ENCODE measurements at regions of chr3 and their contacts with region 1.

Region 1: DNA sequence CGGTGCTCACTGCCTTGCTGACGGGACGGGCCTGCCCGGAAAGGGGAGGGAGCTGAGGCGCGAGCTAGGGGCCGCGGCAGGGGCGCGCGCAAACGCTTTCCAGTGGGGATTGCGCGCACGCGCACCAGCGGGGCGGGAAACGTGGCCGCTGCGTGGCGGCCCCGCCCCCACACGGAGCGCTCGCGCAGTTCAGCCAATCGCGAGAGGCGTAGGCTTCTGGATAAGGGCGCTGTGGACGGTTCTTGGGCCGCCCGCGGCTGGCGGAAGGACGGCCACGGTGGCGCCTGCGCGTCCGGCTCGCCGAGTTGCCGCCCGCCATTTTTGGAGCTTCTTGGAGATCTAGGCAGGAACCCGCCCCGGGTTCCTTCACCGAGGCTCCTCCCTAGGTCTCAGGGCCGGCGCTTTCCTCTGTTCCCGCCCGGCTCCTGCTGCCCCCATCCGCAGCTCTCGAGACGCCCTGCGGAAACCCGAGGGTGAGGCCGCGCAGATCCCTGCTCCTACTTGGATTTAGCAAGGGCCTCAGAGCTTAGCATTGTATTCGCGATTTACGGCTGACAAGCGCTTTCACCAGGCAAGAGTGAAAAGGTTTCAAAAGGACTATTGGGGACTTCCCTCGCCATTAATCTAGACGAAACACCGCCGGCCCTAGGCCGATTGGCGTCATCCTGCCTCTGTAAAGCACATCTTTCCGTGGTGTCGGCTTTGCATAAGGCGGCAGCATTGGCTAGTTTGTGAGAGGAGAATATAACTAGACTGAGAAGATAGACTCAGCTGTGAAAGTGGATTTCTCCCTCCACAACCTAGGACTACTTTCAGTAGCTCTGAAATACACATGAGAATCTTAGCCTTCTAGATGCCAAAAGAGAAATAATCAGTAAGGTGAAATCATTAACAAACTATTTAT is 496 bp upstream of the STAG1 start:
- DNase-seq: peak; percentile 100

Region 2: DNA sequence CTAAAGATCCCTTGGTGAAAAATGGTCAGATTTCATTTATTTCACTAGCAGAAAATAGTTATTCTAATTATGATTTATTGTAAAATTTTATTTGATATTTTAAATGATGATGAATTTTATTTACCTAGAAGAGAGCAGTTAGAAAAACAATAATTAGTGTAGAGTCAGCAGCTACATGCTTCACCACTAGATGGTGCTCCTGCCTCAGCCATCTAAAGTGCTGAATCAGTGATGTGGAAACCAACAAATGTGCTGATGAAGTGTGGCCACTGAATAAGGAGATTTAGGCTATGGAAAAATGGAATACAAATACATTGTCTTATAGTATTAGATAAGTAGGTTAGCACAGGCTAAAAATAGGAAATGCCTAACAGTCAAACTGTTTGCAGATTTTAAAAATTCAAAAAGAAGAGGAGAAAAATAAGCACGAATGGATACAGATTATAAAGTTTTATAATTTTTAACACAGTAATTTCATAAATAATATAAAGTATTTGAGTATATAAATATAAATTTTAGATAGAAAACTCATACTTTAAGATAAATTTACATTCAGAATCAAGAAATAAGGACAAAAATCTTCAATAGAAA is 677.4 kb before region 1 on chr3:
- intact Hi-C with region 1: loop called in 1 of 2 experiments (anchors 10 kb)
- DNase-seq: no peak

Region 3: DNA sequence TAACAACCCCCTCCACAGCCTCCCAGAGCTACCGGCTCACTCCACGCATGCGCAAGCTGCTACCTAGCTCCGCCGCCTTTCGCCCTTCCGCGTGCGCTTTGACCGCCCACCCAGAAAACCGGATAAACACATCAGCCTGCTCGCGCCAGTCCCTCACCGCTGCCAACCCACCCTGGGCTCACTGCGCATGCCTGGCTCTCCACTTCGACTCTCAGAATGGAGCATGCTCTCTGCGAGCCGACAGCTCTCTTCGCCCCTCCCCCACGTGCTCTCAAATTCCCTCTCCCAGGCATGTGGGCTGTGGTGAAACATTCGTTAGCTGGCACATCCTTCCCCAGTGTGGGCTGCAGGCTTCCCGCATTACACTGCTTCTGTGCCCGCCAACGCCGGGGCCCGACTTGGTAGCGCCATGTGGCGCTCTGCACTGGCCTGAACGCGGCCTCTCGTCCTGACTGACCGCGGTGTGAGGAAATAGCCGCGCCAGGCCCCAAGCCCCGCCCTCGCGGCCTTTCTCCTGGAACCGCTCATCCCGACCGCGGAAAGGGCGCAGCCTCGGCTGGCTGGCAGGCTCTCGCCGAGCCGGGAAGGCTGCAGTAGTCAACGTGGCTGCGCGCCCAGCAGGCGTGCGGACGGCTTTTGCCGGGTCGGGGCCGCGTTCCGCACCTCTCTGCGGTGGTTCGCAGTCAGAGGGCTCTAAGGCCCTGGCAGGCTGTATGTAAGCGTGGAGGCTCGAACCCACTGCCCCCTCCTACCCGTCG is 556.1 kb before region 1 on chr3:
- intact Hi-C with region 1: loop called in 1 of 2 experiments (anchors 5 kb)
- DNase-seq: peak; percentile 100

Region 4: DNA sequence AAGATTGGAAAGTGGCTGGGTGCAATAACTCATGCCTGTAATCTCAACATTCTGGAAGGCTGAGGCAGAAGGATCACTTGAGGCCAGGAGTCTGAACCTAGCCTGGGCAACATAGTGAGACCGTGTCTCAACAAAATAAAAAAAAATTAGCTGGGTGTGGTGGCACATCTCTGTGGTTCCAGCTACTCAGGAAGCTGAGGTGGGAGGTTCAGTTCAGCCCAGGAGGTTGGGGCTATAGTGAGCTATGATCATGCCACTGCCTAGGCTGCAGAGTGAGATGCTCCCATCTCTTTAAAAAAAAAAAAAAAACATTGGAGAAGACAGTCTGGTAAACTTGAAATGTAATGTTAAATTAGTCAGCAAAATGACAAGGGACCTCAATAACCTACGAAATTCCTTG is 58.4 kb before region 1 on chr3:
- intact Hi-C with region 1: no loop called
- DNase-seq: no peak

Region 5: DNA sequence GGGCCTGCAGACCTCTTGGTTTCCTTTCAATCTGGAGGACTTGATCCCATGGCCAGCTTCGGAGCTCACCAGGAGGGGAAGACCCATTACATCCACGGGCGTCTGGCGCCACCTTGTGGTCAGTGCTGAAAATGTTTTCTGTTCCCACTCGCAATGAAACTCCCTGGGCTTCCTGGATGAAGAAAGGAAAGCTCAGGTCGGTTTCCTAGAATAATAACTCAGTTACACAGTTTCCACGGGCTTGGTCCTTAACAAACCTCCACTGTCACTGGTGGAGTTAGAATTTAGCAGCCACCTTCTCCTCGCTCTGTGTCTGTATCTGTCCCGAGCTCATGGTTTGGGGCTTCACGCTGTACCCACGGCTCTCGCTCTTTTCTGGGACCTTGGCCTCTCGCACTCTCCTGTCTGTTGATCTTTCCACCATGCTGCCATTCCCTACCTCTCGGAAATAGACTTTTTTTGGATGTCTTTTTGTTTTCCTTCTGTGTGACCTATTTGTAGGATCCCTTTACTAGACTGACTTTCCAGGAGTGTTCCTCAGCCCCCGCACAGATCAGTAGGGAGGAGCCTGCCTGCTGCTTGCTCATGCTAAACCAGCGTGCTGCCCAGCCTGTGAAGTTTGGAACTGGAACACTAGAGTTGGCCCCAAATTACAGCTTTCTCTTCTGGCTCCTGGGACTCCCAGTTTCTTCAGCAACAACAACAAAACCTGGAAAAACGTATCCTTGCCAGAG is 261.4 kb after region 1 on chr3:
- intact Hi-C with region 1: loop called (anchors 5 to 10 kb)
- DNase-seq: peak; percentile 96